GM10248 (cell line): ENCODE measurements at regions of chr3 and their contacts with region 1.

Region 1: DNA sequence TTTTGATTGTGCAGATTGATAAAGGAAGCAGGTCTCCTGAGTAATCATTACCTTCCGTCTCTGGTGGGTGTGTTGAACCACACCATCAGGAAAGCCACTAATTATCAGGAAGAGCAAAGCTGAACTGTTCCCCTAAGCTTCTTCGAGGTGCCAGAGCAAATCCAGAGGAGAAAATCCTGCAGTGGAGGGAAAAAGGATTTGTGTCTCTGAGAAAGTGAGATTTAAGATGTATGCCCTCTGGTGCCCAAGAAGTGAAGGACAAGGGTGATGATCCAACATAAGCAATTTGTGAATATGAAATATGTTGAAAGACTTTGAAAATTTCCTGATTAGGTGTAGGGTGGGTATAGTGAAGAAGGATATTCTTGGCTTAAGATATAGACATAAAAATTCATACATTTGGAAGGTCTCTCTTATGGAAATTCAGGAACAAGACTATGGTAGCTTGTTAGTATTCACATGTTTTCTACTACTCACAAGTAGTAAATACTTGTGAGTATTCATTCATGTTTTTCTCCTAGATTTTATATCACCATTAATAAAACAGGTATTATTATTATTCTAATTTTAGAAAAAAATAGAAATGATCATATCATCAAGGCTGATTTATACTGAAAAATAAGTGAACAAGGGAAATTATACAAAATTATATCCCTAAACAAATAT is 34.8 kb downstream of the COMMD2 start:
- DNase-seq: peak; percentile 40
- CTCF ChIP-seq: peak; percentile 65

Region 2: DNA sequence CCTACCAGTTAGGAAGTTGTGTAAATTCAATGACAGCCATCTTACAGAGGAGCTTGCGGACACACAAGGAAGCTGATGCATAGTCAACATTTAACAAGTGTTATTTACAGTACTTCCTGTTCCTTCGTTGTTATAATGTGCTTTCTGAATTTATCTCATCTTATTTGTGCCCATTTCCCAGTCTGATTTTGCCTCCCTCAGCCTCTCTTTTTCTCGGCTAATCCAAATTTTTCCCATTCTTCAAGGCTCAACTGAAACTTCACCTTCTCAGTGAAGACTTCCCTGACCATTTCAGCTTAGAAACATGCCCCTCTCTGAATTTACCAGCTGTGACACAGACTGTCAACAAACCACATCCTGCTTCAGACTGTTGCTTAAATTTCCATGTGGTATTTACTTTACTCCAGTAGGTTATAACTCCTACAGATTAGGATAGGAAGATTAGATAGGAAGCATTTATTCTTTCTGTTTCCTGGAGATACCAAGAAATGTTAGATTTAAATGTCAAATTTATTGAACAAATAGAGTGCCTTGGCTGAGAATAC is 440.1 kb before region 1 on chr3:
- CTCF ChIA-PET with region 1: no interaction called
- POLR2A ChIA-PET with region 1: no interaction called
- DNase-seq: no peak
- CTCF ChIP-seq: no peak

Region 3: DNA sequence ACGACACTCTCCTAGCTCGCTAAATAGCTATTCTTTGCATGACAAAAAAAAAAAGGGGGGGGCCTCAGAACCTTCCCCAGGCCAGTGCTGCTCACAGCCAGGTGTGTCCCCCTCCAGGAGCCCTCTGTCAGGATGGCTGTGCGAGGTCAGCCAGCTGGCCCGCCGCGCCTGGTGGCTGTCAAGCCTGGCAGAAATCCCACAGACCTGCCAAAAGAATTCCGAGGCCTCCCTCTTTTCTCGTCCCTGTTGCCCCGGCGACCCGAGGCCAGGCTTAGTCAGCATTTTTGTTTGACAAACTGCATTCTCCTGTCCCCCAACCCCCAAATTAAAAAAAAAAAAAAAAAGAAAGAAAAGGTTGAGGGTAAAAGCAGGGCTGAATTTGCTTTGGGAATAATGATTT is 181.1 kb before region 1 on chr3:
- CTCF ChIA-PET with region 1: interaction called, 12 read pairs
- POLR2A ChIA-PET with region 1: no interaction called
- DNase-seq: no peak
- CTCF ChIP-seq: no peak

Region 4: GRCh38 chr3:149575961-149576564 is 141.5 kb before region 1 on chr3:
- CTCF ChIA-PET with region 1: interaction called, 91 read pairs
- POLR2A ChIA-PET with region 1: no interaction called
- DNase-seq: no peak
- CTCF ChIP-seq: no peak

Region 5: DNA sequence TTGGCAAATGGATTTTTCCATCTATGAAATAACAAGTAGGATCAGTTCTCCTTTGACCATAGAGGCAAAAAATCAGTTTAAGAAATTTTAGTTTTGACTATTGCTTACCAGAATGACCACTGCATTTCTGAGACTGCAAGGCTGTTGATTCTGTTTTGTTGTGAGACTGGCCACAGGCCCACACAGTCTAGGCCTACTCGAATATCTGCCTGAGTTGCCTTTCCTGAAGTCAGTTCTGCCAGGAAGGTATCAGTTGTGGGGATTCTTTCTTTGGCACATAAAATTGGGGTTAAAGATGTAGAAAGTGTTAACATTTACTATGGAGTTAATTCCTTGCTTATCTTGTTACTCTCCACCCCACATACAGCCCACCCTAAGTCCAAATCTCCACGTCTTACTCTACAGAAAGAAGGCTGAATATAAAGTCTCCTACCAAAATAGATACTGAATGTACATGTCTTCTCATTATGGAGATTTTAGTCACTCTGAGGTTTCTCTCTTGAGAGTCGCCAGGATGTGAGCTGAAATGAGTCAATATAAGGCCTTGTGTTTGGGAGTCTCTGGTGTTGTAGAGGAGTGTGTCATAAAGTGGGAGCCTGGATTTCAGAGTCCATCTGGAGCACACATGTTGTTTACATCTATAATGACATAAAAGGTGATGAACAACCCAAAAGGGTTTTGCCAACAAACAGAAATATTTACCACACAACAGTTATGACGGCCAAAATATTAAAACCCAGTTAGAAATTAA is 14.7 kb before region 1 on chr3:
- CTCF ChIA-PET with region 1: interaction called, 29 read pairs
- POLR2A ChIA-PET with region 1: no interaction called
- DNase-seq: no peak
- CTCF ChIP-seq: no peak

Region 6: DNA sequence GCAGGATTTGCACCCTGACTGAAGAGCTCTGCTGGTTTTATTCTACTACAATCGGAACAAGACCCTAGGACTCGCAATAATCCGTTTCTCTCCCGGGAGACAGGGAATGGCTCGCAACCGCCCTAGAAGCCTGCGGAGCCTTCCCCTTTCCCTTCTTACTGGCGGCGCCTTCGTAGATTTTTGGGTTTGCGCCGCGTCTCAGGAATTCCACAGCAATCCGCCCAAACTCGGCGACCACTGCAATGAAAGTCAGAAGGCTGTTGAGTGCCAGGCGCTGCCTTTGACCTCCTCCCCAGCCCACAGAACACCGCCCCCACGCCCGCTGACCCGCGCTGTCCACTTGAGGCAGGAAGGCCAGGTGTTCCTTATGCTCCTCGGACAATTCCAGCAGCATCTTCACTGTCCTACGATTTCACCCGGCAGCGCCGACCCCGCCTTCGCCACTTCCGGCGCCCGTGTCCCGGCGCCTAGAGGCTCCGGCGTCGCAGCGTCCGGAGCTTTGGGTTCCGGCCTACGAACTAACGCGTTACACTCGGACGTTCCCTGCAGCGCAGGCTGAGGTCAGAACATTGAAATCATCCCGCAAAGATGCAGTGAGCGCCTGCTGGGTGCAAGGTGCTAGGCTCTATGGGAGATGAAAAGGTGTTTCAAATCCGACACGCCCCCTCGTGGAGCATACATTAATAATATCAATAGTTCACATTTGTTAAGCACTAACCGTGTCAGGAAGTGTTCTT is 34.7 kb after region 1 on chr3 and contains the start of gene COMMD2:
- CTCF ChIA-PET with region 1: interaction called, 10 read pairs
- POLR2A ChIA-PET with region 1: no interaction called
- DNase-seq: peak; percentile 84
- CTCF ChIP-seq: no peak